GM12878 (cell line): ENCODE measurements at regions of chr22 and their contacts with region 1.

Region 1: GRCh38 chr22:30079952-30080533 is at the start of gene HORMAD2:
- DNase-seq: no peak
- ATAC-seq: peak; percentile 73
- H3K4me3 ChIP-seq: no peak within 1 kb of the TSS
- H3K27ac ChIP-seq: no peak within 1 kb of the TSS
- H3K4me1 ChIP-seq: peaks cover 19% of the 10 kb centered on the region
- H3K27me3 ChIP-seq: no peaks in the 10 kb centered on the region
- CTCF ChIP-seq: no peak
- EP300 ChIP-seq: no peak
- POLR2A ChIP-seq: no peak
- RAD21 ChIP-seq: no peak
- polyA plus RNA-seq, gene HORMAD2: 0.13 TPM in 1 of 2 experiments, not detected in the other

Region 2: GRCh38 chr22:29394931-29395581 is 685.0 kb before region 1 on chr22:
- CTCF ChIA-PET with region 1: no interaction called
- POLR2A ChIA-PET with region 1: no interaction called
- RAD21 ChIA-PET with region 1: no interaction called
- SMC1A ChIA-PET with region 1: no interaction called
- in situ Hi-C with region 1: loop called (anchors 10 kb)
- intact Hi-C with region 1: no loop called
- DNase-seq: no peak
- ATAC-seq: peak; percentile 93
- H3K4me3 ChIP-seq: no peak overlapping the region
- H3K27ac ChIP-seq: no peak overlapping the region
- H3K4me1 ChIP-seq: peaks cover 9% of the 10 kb centered on the region
- H3K27me3 ChIP-seq: no peaks in the 10 kb centered on the region
- CTCF ChIP-seq: peak; percentile 85 to 97 (median 94); a peak in 5 of 6 replicates
- EP300 ChIP-seq: no peak
- POLR2A ChIP-seq: no peak
- RAD21 ChIP-seq: peak; percentile 92

Region 3: GRCh38 chr22:29635734-29636357 is 444.2 kb before region 1 on chr22:
- CTCF ChIA-PET with region 1: interaction called, 12 read pairs
- POLR2A ChIA-PET with region 1: no interaction called
- RAD21 ChIA-PET with region 1: no interaction called
- SMC1A ChIA-PET with region 1: no interaction called
- in situ Hi-C with region 1: no loop called
- intact Hi-C with region 1: no loop called
- DNase-seq: peak; percentile 23
- ATAC-seq: peak; percentile 78
- H3K4me3 ChIP-seq: no peak overlapping the region
- H3K27ac ChIP-seq: no peak overlapping the region
- H3K4me1 ChIP-seq: peaks cover 11% of the 10 kb centered on the region
- H3K27me3 ChIP-seq: no peaks in the 10 kb centered on the region
- CTCF ChIP-seq: peak; percentile 62 to 79 (median 70)
- EP300 ChIP-seq: no peak
- POLR2A ChIP-seq: no peak
- RAD21 ChIP-seq: peak; percentile 72

Region 4: GRCh38 chr22:29689880-29690213 is 390.2 kb before region 1 on chr22:
- CTCF ChIA-PET with region 1: interaction called, 7 read pairs
- POLR2A ChIA-PET with region 1: no interaction called
- RAD21 ChIA-PET with region 1: no interaction called
- SMC1A ChIA-PET with region 1: interaction called, 3 read pairs
- in situ Hi-C with region 1: no loop called
- intact Hi-C with region 1: loop called (anchors 10 kb)
- DNase-seq: no peak
- ATAC-seq: peak; percentile 63
- H3K4me3 ChIP-seq: no peak overlapping the region
- H3K27ac ChIP-seq: no peak overlapping the region
- H3K4me1 ChIP-seq: no peaks in the 10 kb centered on the region
- H3K27me3 ChIP-seq: no peaks in the 10 kb centered on the region
- CTCF ChIP-seq: peak; percentile 61 to 69 (median 67); a peak in 5 of 6 replicates
- EP300 ChIP-seq: no peak
- POLR2A ChIP-seq: no peak
- RAD21 ChIP-seq: peak; percentile 55

Region 5: DNA sequence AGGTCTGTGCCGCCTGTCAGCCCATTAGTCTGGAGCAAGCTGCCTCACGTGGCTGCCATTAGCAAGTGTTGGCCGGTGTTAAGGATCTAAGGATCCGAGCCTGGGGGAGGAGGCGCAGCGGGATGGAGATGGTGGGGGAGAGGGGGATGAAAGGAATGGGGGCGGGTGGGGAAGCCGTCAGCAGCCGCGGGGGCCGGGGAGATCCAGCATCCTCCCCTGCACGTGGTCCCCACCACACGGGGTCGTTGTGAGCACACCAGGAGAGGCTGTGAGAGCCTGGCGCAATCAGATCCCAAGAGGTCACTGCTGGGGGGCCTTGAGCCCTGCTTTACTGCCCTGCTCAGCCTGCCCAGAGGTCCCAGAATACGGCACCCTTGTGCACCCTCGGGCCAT is 352.9 kb before region 1 on chr22:
- CTCF ChIA-PET with region 1: no interaction called
- POLR2A ChIA-PET with region 1: no interaction called
- RAD21 ChIA-PET with region 1: no interaction called
- SMC1A ChIA-PET with region 1: no interaction called
- in situ Hi-C with region 1: no loop called
- intact Hi-C with region 1: loop called (anchors 10 kb)
- DNase-seq: no peak
- ATAC-seq: peak; percentile 73
- H3K4me3 ChIP-seq: no peak overlapping the region
- H3K27ac ChIP-seq: no peak overlapping the region
- H3K4me1 ChIP-seq: no peaks in the 10 kb centered on the region
- H3K27me3 ChIP-seq: peaks cover 0 to 2% of the 10 kb centered on the region in 2 experiments; a peak in 1 of 4 replicates
- CTCF ChIP-seq: peak in 2 of 3 experiments; percentile 46 to 50; a peak in 3 of 6 replicates
- EP300 ChIP-seq: no peak
- POLR2A ChIP-seq: no peak
- RAD21 ChIP-seq: peak; percentile 50

Region 6: DNA sequence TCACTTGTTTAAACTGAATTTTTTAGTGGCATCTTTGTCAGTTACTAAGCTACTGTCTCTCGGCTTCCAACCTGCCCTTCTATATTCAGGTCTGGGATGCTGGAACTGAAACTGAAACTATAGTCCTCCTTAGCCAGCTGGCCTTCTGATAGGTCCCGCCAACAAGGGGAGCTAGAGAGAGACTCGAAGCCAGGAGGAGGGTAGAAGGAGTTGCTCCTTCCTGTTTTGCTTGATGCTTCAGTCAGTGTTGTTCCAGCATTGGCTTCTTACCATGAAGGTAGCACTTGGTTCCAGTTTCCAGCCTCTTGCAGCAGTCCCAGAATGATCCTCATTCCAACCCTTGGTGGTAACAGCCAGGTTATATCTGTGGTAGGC is 32.7 kb before region 1 on chr22:
- CTCF ChIA-PET with region 1: interaction called, 4 read pairs
- POLR2A ChIA-PET with region 1: no interaction called
- RAD21 ChIA-PET with region 1: interaction called, 3 read pairs
- SMC1A ChIA-PET with region 1: interaction called, 12 read pairs
- in situ Hi-C with region 1: no loop called
- intact Hi-C with region 1: no loop called
- DNase-seq: no peak
- ATAC-seq: peak; percentile 62
- H3K4me3 ChIP-seq: no peak overlapping the region
- H3K27ac ChIP-seq: no peak overlapping the region
- H3K4me1 ChIP-seq: no peaks in the 10 kb centered on the region
- H3K27me3 ChIP-seq: no peaks in the 10 kb centered on the region
- CTCF ChIP-seq: no peak
- EP300 ChIP-seq: no peak
- POLR2A ChIP-seq: no peak
- RAD21 ChIP-seq: no peak